OCI-LY7 (cell line): ENCODE measurements at regions of chr1 and their contacts with region 1.

Region 1: GRCh38 chr1:224457782-224458144 is 23.2 kb upstream of the WDR26 start:
- DNase-seq: no peak
- H3K4me3 ChIP-seq: no peak overlapping the region
- H3K27ac ChIP-seq: no peak overlapping the region
- H3K4me1 ChIP-seq: no peaks in the 10 kb centered on the region
- CTCF ChIP-seq: peak; percentile 64; the same call in 1 of the 2 replicates

Region 2: GRCh38 chr1:224113918-224114786 is 343.6 kb before region 1 on chr1 and contains the start of gene FBXO28:
- CTCF ChIA-PET with region 1: interaction called, 6 read pairs
- POLR2A ChIA-PET with region 1: interaction called, 3 read pairs
- intact Hi-C with region 1: loop called (anchors 2 kb)
- DNase-seq: peak; percentile 95
- H3K4me3 ChIP-seq: peak within 1 kb of the TSS; percentile 78
- H3K27ac ChIP-seq: peak within 1 kb of the TSS; percentile 74
- H3K4me1 ChIP-seq: peaks cover 25% of the 10 kb centered on the region
- CTCF ChIP-seq: no peak
- total RNA-seq, gene FBXO28: 23.3 and 25.1 TPM in 2 replicates

Region 3: DNA sequence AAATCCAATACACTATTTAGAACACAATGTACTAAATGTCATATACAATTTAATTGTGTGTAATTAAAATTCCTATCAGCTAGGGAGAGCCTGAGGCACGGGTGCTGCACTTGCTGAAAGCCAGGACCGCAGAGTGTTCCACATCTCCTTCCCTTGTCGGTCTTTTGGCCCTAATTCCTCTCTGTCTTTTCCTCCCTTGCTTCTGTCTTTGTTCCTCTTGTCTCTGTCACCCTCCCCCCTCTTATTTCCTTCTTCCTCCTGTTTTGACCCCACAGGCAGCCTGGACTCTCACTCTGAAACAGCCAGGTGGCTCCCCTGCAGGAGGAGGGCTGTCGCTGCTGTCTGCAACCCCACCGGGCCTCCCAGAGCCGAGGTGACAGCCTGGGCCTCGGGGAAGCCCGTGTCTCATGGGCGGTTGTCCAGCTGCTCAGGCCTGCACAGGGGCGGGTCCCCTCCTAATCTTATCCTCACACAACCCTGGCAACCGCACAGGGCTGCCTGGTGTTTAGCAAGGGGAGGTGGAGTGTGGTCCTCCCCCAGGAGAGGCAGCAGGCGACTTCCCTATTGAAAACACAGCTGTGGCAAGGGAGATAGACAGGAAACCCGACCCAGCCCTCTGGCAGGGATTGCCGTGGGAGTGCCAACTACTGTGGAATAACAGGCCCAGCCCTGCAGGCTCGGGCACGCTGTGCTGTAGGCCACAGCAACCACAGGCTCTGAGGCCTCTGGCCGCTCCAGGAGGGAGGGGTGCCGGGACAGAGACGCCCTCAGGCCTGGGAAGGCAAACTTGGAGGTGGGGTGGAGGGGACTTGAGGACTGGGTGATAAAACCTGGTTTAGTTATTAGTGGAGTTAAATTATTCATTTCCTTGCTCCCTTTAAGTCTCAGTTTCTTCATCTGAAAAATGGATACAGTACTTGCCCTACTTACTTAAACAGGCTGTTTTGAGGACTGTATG is 45.7 kb after region 1 on chr1:
- CTCF ChIA-PET with region 1: no interaction called
- POLR2A ChIA-PET with region 1: no interaction called
- intact Hi-C with region 1: no loop called
- DNase-seq: peak; percentile 77
- H3K4me3 ChIP-seq: peak overlapping the region; percentile 27
- H3K27ac ChIP-seq: peak overlapping the region; percentile 46
- H3K4me1 ChIP-seq: peaks cover 34% of the 10 kb centered on the region
- CTCF ChIP-seq: peak; percentile 61